BJ (cell line): ENCODE measurements at regions of chr2 and their contacts with region 1.

Region 1: DNA sequence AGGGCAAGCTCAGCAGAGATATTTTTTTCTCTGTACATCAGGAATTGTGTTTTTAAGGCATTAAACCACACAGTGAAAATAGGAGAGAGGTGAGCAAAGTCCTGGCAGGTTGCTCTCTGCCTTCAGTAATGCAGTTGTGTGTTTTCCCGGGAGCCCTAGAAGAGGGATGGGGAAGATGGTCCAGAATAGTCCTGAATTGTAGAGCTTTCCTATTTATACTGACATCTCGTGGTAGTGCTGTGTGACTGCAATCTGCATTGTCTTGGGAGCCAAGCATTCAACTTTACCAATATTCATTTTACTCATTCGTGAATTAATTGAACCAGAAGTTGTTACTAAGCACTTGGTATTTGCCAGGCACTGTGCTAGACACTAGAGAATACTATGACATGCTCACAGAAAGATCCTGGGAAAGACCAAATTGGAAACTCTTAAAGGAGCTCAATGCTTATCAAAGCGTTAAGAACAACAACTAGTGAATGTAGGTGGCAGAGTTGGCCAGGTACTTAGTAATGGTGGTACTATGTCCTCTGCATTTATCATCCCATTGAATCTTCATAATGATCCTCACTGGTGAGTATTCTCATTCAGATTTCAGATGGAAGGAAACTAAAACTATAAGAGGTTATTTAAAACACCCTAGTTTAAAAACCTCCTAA is 214.6 kb downstream of the TRIB2 start:
- DNase-seq: no peak
- H3K4me3 ChIP-seq: no peak overlapping the region
- H3K27me3 ChIP-seq: no peaks in the 10 kb centered on the region; the same call in 1 of the 2 replicates
- CTCF ChIP-seq: peak; percentile 88

Region 2: GRCh38 chr2:11829947-11830707 is 1101.2 kb before region 1 on chr2:
- CTCF ChIA-PET with region 1: interaction called, 13 read pairs
- POLR2A ChIA-PET with region 1: no interaction called
- DNase-seq: peak; percentile 86
- H3K4me3 ChIP-seq: no peak overlapping the region; the same call in 1 of the 2 replicates
- H3K27me3 ChIP-seq: no peaks in the 10 kb centered on the region
- CTCF ChIP-seq: peak; percentile 50

Region 3: DNA sequence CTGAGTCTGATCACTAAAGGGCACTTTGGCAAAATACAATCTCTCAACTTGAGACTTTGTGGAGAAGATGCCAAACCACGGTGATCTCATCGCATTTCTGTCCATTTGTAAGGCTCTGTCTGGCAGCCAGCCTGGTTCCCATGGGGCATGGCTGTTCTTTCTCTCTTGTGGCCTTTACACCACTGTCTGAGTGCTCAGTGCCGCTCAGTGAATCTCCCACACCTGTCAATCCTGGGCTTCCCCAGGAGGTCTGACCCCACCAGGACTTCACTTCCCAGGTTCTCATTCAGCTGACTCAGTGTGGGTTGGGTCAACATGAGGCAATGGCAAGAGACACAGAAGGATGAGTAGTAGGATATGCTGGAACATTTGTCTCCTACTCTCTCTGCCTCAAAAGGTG is 311.3 kb before region 1 on chr2:
- CTCF ChIA-PET with region 1: no interaction called
- POLR2A ChIA-PET with region 1: no interaction called
- DNase-seq: peak; percentile 73
- H3K4me3 ChIP-seq: no peak overlapping the region
- H3K27me3 ChIP-seq: no peaks in the 10 kb centered on the region; the same call in 1 of the 2 replicates
- CTCF ChIP-seq: no peak

Region 4: GRCh38 chr2:12716282-12717190 is 214.8 kb before region 1 on chr2 and contains the start of gene TRIB2:
- CTCF ChIA-PET with region 1: interaction called, 40 read pairs
- POLR2A ChIA-PET with region 1: interaction called, 4 read pairs
- DNase-seq: no peak
- H3K4me3 ChIP-seq: peak within 1 kb of the TSS; percentile 77
- H3K27me3 ChIP-seq: no peaks in the 10 kb centered on the region
- CTCF ChIP-seq: no peak
- polyA plus RNA-seq, gene TRIB2: 11.0 and 12.5 TPM in 2 replicates

Region 5: DNA sequence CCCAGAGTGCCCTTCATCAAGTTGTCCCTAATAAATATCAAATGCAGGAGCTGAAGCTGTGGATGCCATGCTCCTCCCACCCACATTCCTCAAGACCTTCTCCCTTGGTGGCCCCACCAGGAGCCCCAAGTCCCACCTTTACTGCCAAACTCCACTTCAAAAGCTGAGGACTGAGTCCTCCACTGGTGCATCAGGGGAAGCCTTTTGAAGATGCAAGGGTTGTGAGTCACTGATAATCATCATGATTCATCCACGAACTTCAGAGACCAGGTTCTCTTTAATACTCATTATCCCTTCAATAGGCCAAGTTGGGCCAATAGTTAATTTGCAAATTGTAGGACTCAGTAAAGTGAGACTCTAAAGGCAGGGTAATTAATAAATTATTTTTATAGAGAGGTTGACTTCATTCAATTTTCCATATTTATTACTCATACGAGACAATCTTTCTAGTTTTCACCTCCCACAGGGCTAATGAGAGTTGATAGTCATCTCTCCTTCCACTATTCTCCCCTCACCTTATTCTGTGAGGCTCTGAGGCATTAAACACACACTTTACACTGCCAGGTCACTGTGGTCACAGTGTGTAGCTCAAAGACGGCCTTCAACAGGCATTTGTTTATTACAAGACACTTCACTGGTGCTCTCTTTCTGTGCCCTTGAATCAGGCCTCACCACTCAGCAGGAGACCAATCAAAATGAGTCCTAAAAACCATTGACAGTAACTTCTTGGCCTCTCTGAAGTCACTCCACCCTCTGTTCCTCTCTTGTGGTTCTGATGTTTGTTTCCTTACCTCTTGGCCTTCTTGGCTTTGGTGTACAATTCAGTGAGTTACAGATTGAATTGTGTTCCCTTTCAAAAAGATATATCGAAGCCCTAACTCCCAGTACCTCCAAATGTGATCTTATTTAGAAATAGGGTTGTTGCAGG is 114.7 kb before region 1 on chr2:
- CTCF ChIA-PET with region 1: no interaction called
- POLR2A ChIA-PET with region 1: no interaction called
- DNase-seq: no peak
- H3K4me3 ChIP-seq: no peak overlapping the region
- H3K27me3 ChIP-seq: no peaks in the 10 kb centered on the region
- CTCF ChIP-seq: no peak

Region 6: GRCh38 chr2:12881951-12882350 is 49.4 kb before region 1 on chr2:
- CTCF ChIA-PET with region 1: interaction called, 10 read pairs
- POLR2A ChIA-PET with region 1: no interaction called
- DNase-seq: no peak
- H3K4me3 ChIP-seq: no peak overlapping the region
- H3K27me3 ChIP-seq: no peaks in the 10 kb centered on the region
- CTCF ChIP-seq: peak; percentile 25; the same call in 1 of the 2 replicates

Region 7: GRCh38 chr2:12918835-12919445 is 12.4 kb before region 1 on chr2:
- CTCF ChIA-PET with region 1: interaction called, 12 read pairs
- POLR2A ChIA-PET with region 1: interaction called, 3 read pairs
- DNase-seq: peak; percentile 97
- H3K4me3 ChIP-seq: no peak overlapping the region
- H3K27me3 ChIP-seq: no peaks in the 10 kb centered on the region
- CTCF ChIP-seq: no peak

Region 8: GRCh38 chr2:12948961-12949353 is 17.6 kb after region 1 on chr2:
- CTCF ChIA-PET with region 1: interaction called, 18 read pairs
- POLR2A ChIA-PET with region 1: no interaction called
- DNase-seq: no peak
- H3K4me3 ChIP-seq: no peak overlapping the region
- H3K27me3 ChIP-seq: no peaks in the 10 kb centered on the region
- CTCF ChIP-seq: no peak

Region 9: DNA sequence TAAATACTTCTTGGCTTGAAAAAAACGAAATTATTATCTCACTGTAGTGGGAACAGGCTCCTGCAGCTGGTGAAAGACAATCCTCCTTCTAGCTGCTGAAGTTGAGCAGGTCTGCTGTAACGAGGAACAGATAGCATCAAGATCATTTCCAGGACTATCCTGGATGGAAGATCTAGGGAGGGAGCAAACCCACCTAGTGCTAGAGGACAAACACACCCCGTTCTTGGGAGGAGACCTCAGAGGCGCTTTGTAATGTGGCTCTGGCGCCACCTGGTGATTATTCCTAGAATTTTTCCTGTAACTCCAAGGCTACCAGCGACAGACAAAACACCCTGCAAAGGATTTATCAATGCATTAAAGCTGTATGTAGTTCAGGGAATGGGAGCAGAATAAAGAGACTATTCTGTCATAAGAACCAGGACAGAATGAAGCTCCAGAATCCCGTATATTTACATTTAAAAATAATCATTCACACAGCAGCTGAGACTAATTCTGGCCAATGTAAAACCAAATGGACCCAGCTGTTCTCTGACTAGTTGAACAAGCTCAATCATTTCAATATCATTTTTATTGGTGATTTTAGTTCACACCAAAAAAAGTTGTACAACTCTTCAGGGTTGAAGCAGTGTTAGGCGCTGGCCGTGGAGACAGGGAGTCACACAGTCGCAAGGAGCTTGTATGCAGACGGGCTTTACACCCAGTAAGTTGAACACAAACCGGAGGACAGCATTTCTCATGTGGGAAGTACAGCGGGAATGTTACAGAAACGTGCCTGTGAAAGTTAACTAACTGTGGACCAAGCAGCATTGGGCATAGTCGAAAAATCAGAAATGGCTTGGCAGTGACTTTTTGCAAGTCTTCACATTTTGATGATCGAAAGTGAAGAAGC is 75.8 kb after region 1 on chr2:
- CTCF ChIA-PET with region 1: interaction called, 16 read pairs
- POLR2A ChIA-PET with region 1: no interaction called
- DNase-seq: peak; percentile 9
- H3K4me3 ChIP-seq: no peak overlapping the region
- H3K27me3 ChIP-seq: no peaks in the 10 kb centered on the region
- CTCF ChIP-seq: peak; percentile 75